ENCODE measurements at regions of chr3 and their contacts with region 1.

Region 1: GRCh38 chr3:152177757-152178156 is 91.0 kb upstream of the MBNL1 start:
- DNase-seq: no peak
- H3K4me3 Mint-ChIP-seq: no peak overlapping the region
- H3K27ac Mint-ChIP-seq: no peak overlapping the region
- H3K4me1 Mint-ChIP-seq: peaks cover 56% of the 10 kb centered on the region
- H3K27me3 Mint-ChIP-seq: no peaks in the 10 kb centered on the region

Region 2: GRCh38 chr3:152127058-152127457 is 50.7 kb before region 1 on chr3:
- CTCF ChIA-PET with region 1: no interaction called
- intact Hi-C with region 1: loop called (anchors 2 kb)
- DNase-seq: peak; percentile 53
- H3K4me3 Mint-ChIP-seq: no peak overlapping the region
- H3K27ac Mint-ChIP-seq: no peak overlapping the region
- H3K4me1 Mint-ChIP-seq: peaks cover 29% of the 10 kb centered on the region
- H3K27me3 Mint-ChIP-seq: no peaks in the 10 kb centered on the region